ENCODE measurements at regions of chr5 and their contacts with region 1.

Region 1: DNA sequence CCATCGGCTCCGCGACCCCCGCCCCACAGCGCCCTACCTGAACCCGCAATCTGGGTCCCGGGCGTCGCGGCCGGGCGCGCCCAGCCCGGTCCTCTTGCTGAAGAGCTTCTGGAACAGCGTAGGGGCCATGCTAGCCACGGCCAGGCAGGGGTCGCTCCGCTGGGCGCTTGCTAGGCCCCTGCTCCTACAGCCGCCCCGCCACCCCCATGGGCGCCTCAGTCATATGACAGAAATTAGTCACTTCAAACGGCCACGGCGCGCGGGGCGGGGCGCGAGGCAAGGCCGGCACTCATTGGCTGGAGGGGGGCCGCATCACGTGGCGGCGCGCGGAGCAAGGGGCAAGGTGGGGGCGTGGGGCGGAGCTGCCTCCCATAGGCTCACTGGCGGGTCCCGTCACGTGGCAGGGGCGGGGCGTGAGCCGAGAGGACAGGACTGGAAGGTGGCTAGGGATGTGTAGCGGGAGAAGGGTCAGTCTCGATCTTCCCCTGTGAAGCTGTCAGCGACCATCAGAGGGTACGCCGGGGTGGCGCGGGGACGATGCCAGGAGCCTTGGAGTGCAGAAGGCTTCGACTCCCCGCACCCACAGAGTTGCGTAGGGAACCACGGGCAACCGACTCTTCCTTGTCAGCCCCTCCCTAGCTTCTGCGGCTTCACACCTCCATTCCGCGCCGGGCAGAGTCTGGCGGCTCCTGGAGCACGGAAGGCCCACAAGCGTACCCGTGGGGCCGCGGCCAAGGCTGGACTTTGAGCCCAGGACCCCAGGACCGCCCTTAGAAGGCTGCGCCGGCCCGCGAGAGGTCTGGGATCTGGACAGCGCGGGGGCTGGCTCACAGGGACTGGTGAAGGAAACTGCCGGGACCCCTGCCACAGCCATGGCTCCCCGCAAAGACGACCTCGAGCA is at the start of gene FNIP1:
- DNase-seq: peak; percentile 99
- H3K4me3 Mint-ChIP-seq: peak within 1 kb of the TSS; percentile 97
- H3K27ac Mint-ChIP-seq: peak within 1 kb of the TSS; percentile 78
- H3K4me1 Mint-ChIP-seq: peaks cover 19% of the 10 kb centered on the region
- H3K27me3 Mint-ChIP-seq: no peaks in the 10 kb centered on the region
- total RNA-seq, gene FNIP1: 16.8 to 17.8 TPM

Region 2: GRCh38 chr5:131170540-131171275 is 626.3 kb before region 1 on chr5 and contains the start of gene LYRM7:
- CTCF ChIA-PET with region 1: no interaction called
- intact Hi-C with region 1: loop called (anchors 2 kb)
- DNase-seq: peak; percentile 98
- H3K4me3 Mint-ChIP-seq: peak within 1 kb of the TSS; percentile 99
- H3K27ac Mint-ChIP-seq: peak within 1 kb of the TSS; percentile 92
- H3K4me1 Mint-ChIP-seq: peaks cover 44% of the 10 kb centered on the region
- H3K27me3 Mint-ChIP-seq: no peaks in the 10 kb centered on the region
- total RNA-seq, gene LYRM7: 14.6 to 15.0 TPM

Region 3: GRCh38 chr5:131423056-131423455 is 374.0 kb before region 1 on chr5:
- CTCF ChIA-PET with region 1: no interaction called
- intact Hi-C with region 1: loop called (anchors 5 kb)
- DNase-seq: no peak
- H3K4me3 Mint-ChIP-seq: no peak overlapping the region
- H3K27ac Mint-ChIP-seq: peak overlapping the region; percentile 48
- H3K4me1 Mint-ChIP-seq: peaks cover 12% of the 10 kb centered on the region
- H3K27me3 Mint-ChIP-seq: no peaks in the 10 kb centered on the region

Region 4: GRCh38 chr5:131589510-131590348 is 207.3 kb before region 1 on chr5:
- CTCF ChIA-PET with region 1: interaction called, 4 read pairs
- intact Hi-C with region 1: loop called (anchors 1 kb)
- DNase-seq: no peak
- H3K4me3 Mint-ChIP-seq: no peak overlapping the region
- H3K27ac Mint-ChIP-seq: peak overlapping the region; percentile 58
- H3K4me1 Mint-ChIP-seq: peaks cover 42% of the 10 kb centered on the region
- H3K27me3 Mint-ChIP-seq: no peaks in the 10 kb centered on the region

Region 5: GRCh38 chr5:131747180-131748105 is 49.6 kb before region 1 on chr5:
- CTCF ChIA-PET with region 1: interaction called, 4 read pairs
- intact Hi-C with region 1: loop called (anchors 1 kb)
- DNase-seq: no peak
- H3K4me3 Mint-ChIP-seq: peak overlapping the region; percentile 49
- H3K27ac Mint-ChIP-seq: peak overlapping the region; percentile 85
- H3K4me1 Mint-ChIP-seq: peaks cover 37% of the 10 kb centered on the region
- H3K27me3 Mint-ChIP-seq: no peaks in the 10 kb centered on the region

Region 6: DNA sequence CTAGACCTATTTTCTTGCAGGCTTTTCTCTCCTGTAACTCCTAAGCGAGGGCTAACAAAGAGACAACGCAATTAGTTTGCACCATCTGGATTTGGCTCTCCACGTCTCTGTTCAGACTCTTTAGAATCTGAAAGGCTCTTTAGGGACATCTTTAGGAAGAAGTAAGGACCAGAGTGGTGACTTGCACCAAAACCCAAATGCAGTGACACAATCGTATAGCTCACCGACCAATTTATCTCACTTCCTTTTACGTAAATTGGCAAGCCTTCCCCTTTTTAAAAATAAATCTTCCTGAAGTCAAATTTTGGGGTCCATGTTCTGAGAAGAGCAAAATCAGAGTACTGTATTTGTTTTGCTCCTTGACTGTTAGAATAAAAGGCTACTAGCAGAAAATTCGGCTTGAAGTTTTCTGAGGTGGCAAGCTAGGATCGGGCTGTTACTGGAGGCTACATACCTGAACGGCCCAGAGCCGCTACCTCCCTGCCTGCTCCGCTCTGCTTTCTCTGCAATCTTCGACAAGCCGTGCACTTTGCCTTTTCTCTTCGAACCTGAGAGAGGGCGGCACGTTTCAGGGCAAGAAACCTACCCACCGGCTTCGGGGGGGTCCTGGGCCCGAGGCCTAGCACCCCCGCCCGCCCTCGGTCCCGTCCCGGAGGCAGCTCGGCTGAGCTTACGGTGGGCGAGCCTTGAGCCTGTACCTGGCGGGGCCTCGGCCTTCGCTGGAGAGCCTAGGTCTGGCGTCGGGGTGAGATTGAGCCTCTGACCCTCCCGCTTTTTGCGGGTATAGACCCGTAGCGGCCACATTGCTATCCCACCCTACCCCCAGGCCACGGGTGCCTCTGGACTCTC is 147.9 kb after region 1 on chr5:
- CTCF ChIA-PET with region 1: no interaction called
- intact Hi-C with region 1: no loop called
- DNase-seq: no peak
- H3K4me3 Mint-ChIP-seq: peak overlapping the region; percentile 10
- H3K27ac Mint-ChIP-seq: no peak overlapping the region
- H3K4me1 Mint-ChIP-seq: no peaks in the 10 kb centered on the region
- H3K27me3 Mint-ChIP-seq: no peaks in the 10 kb centered on the region

Region 7: DNA sequence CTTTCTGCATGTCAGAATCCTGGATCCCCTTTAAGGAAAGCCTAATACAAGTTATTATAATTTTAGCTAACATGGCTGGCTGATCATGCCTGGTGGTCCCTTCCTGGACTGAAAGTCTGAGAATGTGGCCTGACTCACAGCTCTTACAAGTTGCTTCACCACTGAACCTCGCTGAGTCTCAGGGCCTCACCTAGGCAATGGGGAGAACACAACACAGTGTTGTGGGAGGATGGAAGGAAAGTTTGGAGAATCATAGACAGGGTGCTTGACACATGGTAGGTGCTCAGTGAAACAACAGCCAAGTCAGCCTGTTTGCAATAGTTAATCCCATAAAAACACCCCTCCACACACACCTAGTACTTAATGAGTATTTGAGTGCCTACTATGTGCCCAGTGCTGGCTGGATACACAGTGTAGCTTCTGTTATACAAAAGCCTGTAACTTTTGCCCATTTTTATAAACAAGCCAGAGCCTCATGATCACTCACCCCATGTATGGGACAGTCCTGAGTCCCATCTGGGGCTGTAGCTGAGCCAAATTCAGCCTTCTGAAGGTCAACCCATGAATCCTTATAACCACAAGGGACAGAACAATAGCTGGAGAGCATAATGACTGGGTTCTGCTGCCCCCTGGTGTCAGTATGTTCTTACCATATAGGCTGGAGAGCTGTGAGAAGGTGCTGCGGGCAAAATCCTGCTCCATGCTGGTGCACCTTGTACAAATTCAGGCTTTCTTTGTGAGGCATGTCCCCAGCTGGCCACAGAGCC is 210.5 kb after region 1 on chr5:
- CTCF ChIA-PET with region 1: no interaction called
- intact Hi-C with region 1: loop called (anchors 5 kb)
- DNase-seq: peak; percentile 93
- H3K4me3 Mint-ChIP-seq: no peak overlapping the region
- H3K27ac Mint-ChIP-seq: no peak overlapping the region
- H3K4me1 Mint-ChIP-seq: peaks cover 17% of the 10 kb centered on the region
- H3K27me3 Mint-ChIP-seq: peaks cover 19% of the 10 kb centered on the region

Region 8: GRCh38 chr5:132293066-132293991 is 496.3 kb after region 1 on chr5:
- CTCF ChIA-PET with region 1: no interaction called
- intact Hi-C with region 1: loop called (anchors 1 kb)
- DNase-seq: peak; percentile 92
- H3K4me3 Mint-ChIP-seq: peak overlapping the region; percentile 92
- H3K27ac Mint-ChIP-seq: peak overlapping the region; percentile 89
- H3K4me1 Mint-ChIP-seq: peaks cover 23% of the 10 kb centered on the region
- H3K27me3 Mint-ChIP-seq: peaks cover 14% of the 10 kb centered on the region

Measured in activated naive CD4-positive, alpha-beta T cell treated with anti-CD3 and anti-CD28 coated beads for 36 hours (primary cell).